Caco-2 (cell line): ENCODE measurements at regions of chr1 and their contacts with region 1.

Region 1: GRCh38 chr1:119372490-119373086 is 4.0 kb downstream of the HAO2 start:
- DNase-seq: peak; percentile 53 to 65
- H3K4me3 ChIP-seq: no peak overlapping the region
- H3K4me3 Mint-ChIP-seq: no peak overlapping the region
- H3K27ac Mint-ChIP-seq: no peak overlapping the region
- H3K4me1 ChIP-seq: no peaks in the 10 kb centered on the region
- H3K4me1 Mint-ChIP-seq: peaks cover 12% of the 10 kb centered on the region
- H3K27me3 ChIP-seq: no peaks in the 10 kb centered on the region
- H3K27me3 Mint-ChIP-seq: no peaks in the 10 kb centered on the region
- CTCF ChIP-seq: peak; percentile 34 to 36

Region 2: DNA sequence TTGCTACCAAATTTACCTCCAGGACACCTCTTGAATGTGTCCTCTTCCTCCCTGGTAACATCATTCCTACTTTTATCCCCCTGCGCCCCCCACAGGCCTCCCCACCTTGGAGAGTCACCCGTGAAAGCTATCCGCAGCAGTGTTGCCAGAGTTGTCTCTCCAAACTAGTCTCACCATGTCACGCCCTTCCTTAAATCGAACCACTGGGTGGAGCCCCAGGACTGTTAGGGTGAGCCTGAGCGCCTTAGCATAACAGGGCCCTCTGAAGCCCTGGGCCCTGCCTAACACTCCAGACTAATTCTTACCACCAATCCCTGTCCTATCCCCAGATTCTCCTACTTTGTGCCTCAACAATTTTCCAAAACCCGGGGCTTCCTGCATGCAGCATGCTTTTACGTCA is 77.4 kb after region 1 on chr1:
- CTCF ChIA-PET with region 1: interaction called, 3 read pairs
- POLR2A ChIA-PET with region 1: no interaction called
- intact Hi-C with region 1: loop called (anchors 1 kb)
- DNase-seq: peak; percentile 47 to 51
- H3K4me3 ChIP-seq: no peak overlapping the region
- H3K4me3 Mint-ChIP-seq: no peak overlapping the region
- H3K27ac Mint-ChIP-seq: no peak overlapping the region
- H3K4me1 ChIP-seq: no peaks in the 10 kb centered on the region
- H3K4me1 Mint-ChIP-seq: no peaks in the 10 kb centered on the region
- H3K27me3 ChIP-seq: no peaks in the 10 kb centered on the region
- H3K27me3 Mint-ChIP-seq: no peaks in the 10 kb centered on the region
- CTCF ChIP-seq: peak; percentile 21 to 25

Region 3: GRCh38 chr1:119549719-119550132 is 177.1 kb after region 1 on chr1:
- CTCF ChIA-PET with region 1: no interaction called
- POLR2A ChIA-PET with region 1: no interaction called
- intact Hi-C with region 1: loop called (anchors 10 kb)
- DNase-seq: peak; percentile 66 to 75
- H3K4me3 ChIP-seq: no peak overlapping the region
- H3K4me3 Mint-ChIP-seq: no peak overlapping the region
- H3K27ac Mint-ChIP-seq: no peak overlapping the region
- H3K4me1 ChIP-seq: no peaks in the 10 kb centered on the region
- H3K4me1 Mint-ChIP-seq: peaks cover 11% of the 10 kb centered on the region
- H3K27me3 ChIP-seq: no peaks in the 10 kb centered on the region
- H3K27me3 Mint-ChIP-seq: no peaks in the 10 kb centered on the region
- CTCF ChIP-seq: peak in 1 of 2 experiments; percentile 58

Region 4: GRCh38 chr1:119662034-119662437 is 289.4 kb after region 1 on chr1:
- CTCF ChIA-PET with region 1: interaction called, 3 read pairs
- POLR2A ChIA-PET with region 1: no interaction called
- intact Hi-C with region 1: loop called (anchors 5 kb)
- DNase-seq: no peak
- H3K4me3 ChIP-seq: no peak overlapping the region
- H3K4me3 Mint-ChIP-seq: no peak overlapping the region
- H3K27ac Mint-ChIP-seq: no peak overlapping the region
- H3K4me1 ChIP-seq: peaks cover 22% of the 10 kb centered on the region
- H3K4me1 Mint-ChIP-seq: peaks cover 32% of the 10 kb centered on the region
- H3K27me3 ChIP-seq: no peaks in the 10 kb centered on the region
- H3K27me3 Mint-ChIP-seq: no peaks in the 10 kb centered on the region
- CTCF ChIP-seq: no peak